Sigmoid colon (tissue), 7 donors: ENCODE measurements at regions of chr19 and their contacts with region 1.

Region 1: DNA sequence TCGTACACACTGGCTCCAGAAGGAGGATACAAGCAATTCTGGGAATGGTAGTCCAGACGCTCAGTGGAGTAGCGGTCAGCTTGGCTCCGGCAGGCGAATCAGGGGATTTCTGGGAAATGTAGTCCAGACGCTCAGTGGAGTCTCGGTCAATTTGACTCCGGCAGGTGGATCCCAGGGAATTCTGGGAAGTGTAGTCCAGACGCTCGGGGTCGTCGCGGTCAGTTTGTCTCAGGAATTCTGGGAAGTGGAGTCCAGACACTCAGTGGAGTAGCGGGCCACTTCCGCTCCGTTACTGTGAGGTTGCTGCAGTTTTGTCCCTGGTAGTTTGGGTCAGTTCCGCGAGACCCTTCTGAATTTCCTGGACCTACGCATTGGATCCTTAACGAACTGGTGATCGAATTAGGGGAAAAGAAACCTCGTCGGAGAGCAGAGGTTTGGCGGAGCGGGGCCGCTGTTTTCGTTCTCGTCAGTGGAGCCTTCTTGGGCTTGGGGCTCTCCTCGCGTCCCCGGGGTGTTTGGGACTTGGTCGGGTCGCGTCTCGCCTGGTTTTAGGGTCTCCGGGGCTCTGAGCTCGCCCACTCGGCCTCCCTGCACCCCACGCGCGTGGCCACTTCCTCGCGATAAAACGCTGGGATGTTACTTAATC is at the start of gene ZNF225:
- DNase-seq: peak; percentile 98
- H3K4me3 ChIP-seq: peak within 1 kb of the TSS; percentile 48 to 79 (median 64)
- H3K27ac ChIP-seq: peak within 1 kb of the TSS; percentile 76 to 83 (median 82)
- H3K4me1 ChIP-seq: peaks cover 0 to 24% (median 20%) of the 10 kb centered on the region in 4 donors
- H3K27me3 ChIP-seq: no peaks in the 10 kb centered on the region
- CTCF ChIP-seq: no peak
- EP300 ChIP-seq: peak in 1 of 4 donors; percentile 25
- POLR2A ChIP-seq: no peak
- total RNA-seq, gene ZNF225: 3.0 to 4.9 (median 3.4) TPM

Region 2: GRCh38 chr19:43983912-43984686 is 129.2 kb before region 1 on chr19 and contains the start of gene ZNF155:
- intact Hi-C with region 1: loop called (anchors 5 kb)
- DNase-seq: peak; percentile 97
- H3K4me3 ChIP-seq: peak within 1 kb of the TSS; percentile 67 to 80 (median 72)
- H3K27ac ChIP-seq: peak within 1 kb of the TSS; percentile 78 to 83 (median 83)
- H3K4me1 ChIP-seq: peaks cover 0 to 16% (median 6%) of the 10 kb centered on the region in 4 donors
- H3K27me3 ChIP-seq: no peaks in the 10 kb centered on the region
- CTCF ChIP-seq: no peak
- EP300 ChIP-seq: no peak
- POLR2A ChIP-seq: no peak
- total RNA-seq, gene ZNF155: 5.5 to 8.2 (median 7.5) TPM

Region 3: GRCh38 chr19:44051654-44052402 is 61.4 kb before region 1 on chr19 and contains the start of gene ZNF223:
- intact Hi-C with region 1: loop called (anchors 5 kb)
- DNase-seq: peak; percentile 97
- H3K4me3 ChIP-seq: peak within 1 kb of the TSS; percentile 58 to 81 (median 68)
- H3K27ac ChIP-seq: peak within 1 kb of the TSS; percentile 73 to 78 (median 77)
- H3K4me1 ChIP-seq: peaks cover 0 to 17% (median 13%) of the 10 kb centered on the region in 4 donors
- H3K27me3 ChIP-seq: peaks cover 0 to 7% (median 0%) of the 10 kb centered on the region in 3 donors
- CTCF ChIP-seq: no peak
- EP300 ChIP-seq: peak in 1 of 4 donors; percentile 28
- POLR2A ChIP-seq: no peak
- total RNA-seq, gene ZNF223: 2.5 to 5.0 (median 4.2) TPM

Region 4: GRCh38 chr19:44093931-44094765 is 19.1 kb before region 1 on chr19 and contains the start of gene ZNF224:
- intact Hi-C with region 1: loop called (anchors 2 kb)
- DNase-seq: peak; percentile 94
- H3K4me3 ChIP-seq: peak within 1 kb of the TSS; percentile 69 to 83 (median 76)
- H3K27ac ChIP-seq: peak within 1 kb of the TSS; percentile 80 to 81 (median 81)
- H3K4me1 ChIP-seq: peaks cover 0 to 13% (median 10%) of the 10 kb centered on the region in 4 donors
- H3K27me3 ChIP-seq: no peaks in the 10 kb centered on the region
- CTCF ChIP-seq: no peak
- EP300 ChIP-seq: no peak
- POLR2A ChIP-seq: no peak
- total RNA-seq, gene ZNF224: 16.6 to 23.0 (median 19.6) TPM

Region 5: GRCh38 chr19:44207126-44207803 is 94.0 kb after region 1 on chr19:
- intact Hi-C with region 1: loop called (anchors 5 kb)
- DNase-seq: peak; percentile 92
- H3K4me3 ChIP-seq: peak overlapping the region; percentile 34 to 77 (median 66)
- H3K27ac ChIP-seq: peak overlapping the region; percentile 78 to 93 (median 87)
- H3K4me1 ChIP-seq: peaks cover 0 to 7% (median 0%) of the 10 kb centered on the region in 4 donors
- H3K27me3 ChIP-seq: no peaks in the 10 kb centered on the region
- CTCF ChIP-seq: no peak
- EP300 ChIP-seq: no peak
- POLR2A ChIP-seq: no peak

Region 6: GRCh38 chr19:44356383-44357111 is 243.3 kb after region 1 on chr19 and contains the start of gene ZNF112:
- intact Hi-C with region 1: loop called (anchors 10 kb)
- DNase-seq: peak; percentile 93
- H3K4me3 ChIP-seq: peak within 1 kb of the TSS; percentile 39 to 60 (median 54)
- H3K27ac ChIP-seq: peak within 1 kb of the TSS; percentile 58 to 69 (median 62)
- H3K4me1 ChIP-seq: peaks cover 0 to 10% (median 5%) of the 10 kb centered on the region in 4 donors
- H3K27me3 ChIP-seq: no peaks in the 10 kb centered on the region
- CTCF ChIP-seq: no peak
- EP300 ChIP-seq: no peak
- POLR2A ChIP-seq: no peak
- total RNA-seq, gene ZNF112: 3.3 to 8.9 (median 4.7) TPM